Activated CD8-positive, alpha-beta T cell treated with anti-CD3 and anti-CD28 coated beads for 36 hours (primary cell): ENCODE measurements at regions of chr10 and their contacts with region 1.

Region 1: GRCh38 chr10:11178606-11179515 is 161.2 kb downstream of the CELF2 start:
- DNase-seq: peak; percentile 94
- ATAC-seq: peak; percentile 71
- H3K4me3 Mint-ChIP-seq: no peak overlapping the region
- H3K27ac Mint-ChIP-seq: no peak overlapping the region
- H3K4me1 Mint-ChIP-seq: peaks cover 89% of the 10 kb centered on the region
- H3K27me3 Mint-ChIP-seq: no peaks in the 10 kb centered on the region
- CTCF ChIP-seq: no peak

Region 2: GRCh38 chr10:11120711-11121110 is 58.1 kb before region 1 on chr10:
- CTCF ChIA-PET with region 1: no interaction called
- POLR2A ChIA-PET with region 1: no interaction called
- intact Hi-C with region 1: no loop called
- DNase-seq: no peak
- ATAC-seq: no peak
- H3K4me3 Mint-ChIP-seq: no peak overlapping the region
- H3K27ac Mint-ChIP-seq: no peak overlapping the region
- H3K4me1 Mint-ChIP-seq: peaks cover 12% of the 10 kb centered on the region
- H3K27me3 Mint-ChIP-seq: no peaks in the 10 kb centered on the region
- CTCF ChIP-seq: no peak

Region 3: DNA sequence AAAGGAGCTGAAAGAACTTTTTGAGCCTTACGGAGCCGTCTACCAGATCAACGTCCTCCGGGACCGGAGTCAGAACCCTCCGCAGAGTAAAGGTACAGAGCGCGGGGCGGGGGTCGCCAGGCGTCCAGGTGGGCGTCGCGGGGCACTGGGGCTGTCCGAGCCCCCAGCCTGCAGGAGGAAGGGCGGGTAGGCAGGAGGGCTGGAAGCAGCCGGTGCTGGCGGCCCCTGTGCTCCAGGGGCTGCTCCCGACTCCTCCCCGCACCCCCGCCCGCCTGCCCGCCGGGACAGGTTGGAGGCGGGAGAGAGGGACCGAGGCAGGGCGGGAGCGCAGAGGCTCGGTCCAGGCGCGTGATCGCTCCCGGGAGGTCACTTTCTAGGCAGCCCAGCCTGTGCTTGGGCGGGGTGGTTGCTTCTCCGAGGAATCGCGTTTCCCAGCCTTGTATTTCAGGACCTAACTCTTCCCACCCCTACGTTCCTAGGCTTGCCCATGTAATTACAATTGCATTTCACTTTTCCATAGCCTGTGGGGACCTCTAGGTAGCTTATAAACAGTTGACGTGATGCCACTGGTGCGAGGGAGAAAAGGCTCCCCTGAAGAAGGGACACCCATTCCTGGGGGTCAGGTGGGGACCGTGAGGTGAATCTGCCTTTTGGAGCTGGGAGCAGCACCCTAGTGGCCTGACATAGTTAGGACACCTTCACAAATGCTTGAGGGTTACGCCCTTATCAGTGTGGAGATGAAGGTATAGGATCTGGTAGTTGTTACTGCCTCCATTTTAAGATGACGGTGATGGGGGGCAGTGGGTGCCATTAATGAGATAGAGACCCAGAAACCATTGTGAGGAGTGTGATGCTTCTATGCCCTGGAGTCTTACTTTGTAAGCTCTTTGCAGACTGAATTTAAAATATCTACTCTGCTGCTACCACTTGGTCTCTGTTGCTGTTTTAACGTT is 13.0 kb before region 1 on chr10:
- CTCF ChIA-PET with region 1: interaction called, 54 read pairs
- POLR2A ChIA-PET with region 1: interaction called, 251 read pairs
- intact Hi-C with region 1: loop called (anchors 2 kb)
- DNase-seq: peak; percentile 86
- ATAC-seq: peak; percentile 72
- H3K4me3 Mint-ChIP-seq: no peak overlapping the region
- H3K27ac Mint-ChIP-seq: peak overlapping the region; percentile 99
- H3K4me1 Mint-ChIP-seq: peaks cover 26% of the 10 kb centered on the region
- H3K27me3 Mint-ChIP-seq: no peaks in the 10 kb centered on the region
- CTCF ChIP-seq: peak; percentile 80

Region 4: GRCh38 chr10:11201911-11202310 is 23.1 kb after region 1 on chr10:
- CTCF ChIA-PET with region 1: interaction called, 4 read pairs
- POLR2A ChIA-PET with region 1: interaction called, 19 read pairs
- intact Hi-C with region 1: no loop called
- DNase-seq: no peak
- ATAC-seq: no peak
- H3K4me3 Mint-ChIP-seq: no peak overlapping the region
- H3K27ac Mint-ChIP-seq: peak overlapping the region; percentile 97
- H3K4me1 Mint-ChIP-seq: peaks cover 100% of the 10 kb centered on the region
- H3K27me3 Mint-ChIP-seq: no peaks in the 10 kb centered on the region
- CTCF ChIP-seq: no peak

Region 5: GRCh38 chr10:11225935-11226334 is 47.1 kb after region 1 on chr10:
- CTCF ChIA-PET with region 1: interaction called, 3 read pairs
- POLR2A ChIA-PET with region 1: interaction called, 41 read pairs
- intact Hi-C with region 1: no loop called
- DNase-seq: peak; percentile 87
- ATAC-seq: peak; percentile 80
- H3K4me3 Mint-ChIP-seq: peak overlapping the region; percentile 50
- H3K27ac Mint-ChIP-seq: peak overlapping the region; percentile 93
- H3K4me1 Mint-ChIP-seq: peaks cover 95% of the 10 kb centered on the region
- H3K27me3 Mint-ChIP-seq: no peaks in the 10 kb centered on the region
- CTCF ChIP-seq: no peak

Region 6: DNA sequence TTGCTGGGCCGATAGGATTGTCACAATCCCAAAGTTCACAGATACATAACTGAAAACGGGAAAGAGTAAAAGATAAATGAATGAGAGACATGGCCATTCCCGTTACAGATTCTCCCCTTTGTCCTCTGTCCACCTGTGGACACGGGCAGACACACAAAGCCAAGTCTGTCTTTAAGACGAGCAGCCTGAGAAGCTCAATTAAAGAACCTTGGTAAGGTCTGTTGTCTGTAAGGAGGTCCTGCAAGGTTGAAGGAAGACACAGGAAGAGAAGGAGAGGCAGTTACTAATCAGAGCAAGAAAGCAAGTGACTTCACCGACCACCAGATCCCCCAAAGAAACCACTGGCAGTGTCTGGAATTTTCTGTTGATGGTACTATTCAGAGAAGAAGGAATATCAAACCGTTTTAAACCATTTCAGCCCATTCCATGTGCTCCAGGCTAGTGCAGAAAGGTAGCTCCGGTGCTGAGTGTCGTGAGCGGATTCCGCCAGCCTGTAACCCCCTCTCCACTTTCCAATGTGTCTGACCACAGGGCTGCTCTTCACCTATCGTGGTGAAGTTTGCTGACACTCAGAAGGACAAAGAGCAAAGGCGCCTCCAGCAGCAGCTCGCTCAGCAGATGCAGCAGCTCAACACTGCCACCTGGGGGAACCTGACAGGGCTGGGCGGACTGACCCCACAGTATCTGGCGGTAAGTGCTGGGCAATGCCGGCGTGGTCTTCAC is 91.4 kb after region 1 on chr10:
- CTCF ChIA-PET with region 1: interaction called, 6 read pairs
- POLR2A ChIA-PET with region 1: interaction called, 7 read pairs
- intact Hi-C with region 1: loop called (anchors 2 kb)
- DNase-seq: peak; percentile 85
- ATAC-seq: peak; percentile 83
- H3K4me3 Mint-ChIP-seq: peak overlapping the region; percentile 3
- H3K27ac Mint-ChIP-seq: peak overlapping the region; percentile 82
- H3K4me1 Mint-ChIP-seq: peaks cover 81% of the 10 kb centered on the region
- H3K27me3 Mint-ChIP-seq: no peaks in the 10 kb centered on the region
- CTCF ChIP-seq: peak; percentile 86